Endothelial cell of umbilical vein (primary cell): ENCODE measurements at regions of chr5 and their contacts with region 1.

Region 1: GRCh38 chr5:127867389-127867788 is 164.2 kb downstream of the CCDC192 start:
- DNase-seq: no peak
- H3K4me3 ChIP-seq: no peak overlapping the region
- H3K27ac ChIP-seq: no peak overlapping the region
- H3K4me1 ChIP-seq: peaks cover 36% of the 10 kb centered on the region
- H3K27me3 ChIP-seq: peaks cover 0 to 7% of the 10 kb centered on the region in 2 experiments
- CTCF ChIP-seq: no peak
- POLR2A ChIP-seq: no peak

Region 2: DNA sequence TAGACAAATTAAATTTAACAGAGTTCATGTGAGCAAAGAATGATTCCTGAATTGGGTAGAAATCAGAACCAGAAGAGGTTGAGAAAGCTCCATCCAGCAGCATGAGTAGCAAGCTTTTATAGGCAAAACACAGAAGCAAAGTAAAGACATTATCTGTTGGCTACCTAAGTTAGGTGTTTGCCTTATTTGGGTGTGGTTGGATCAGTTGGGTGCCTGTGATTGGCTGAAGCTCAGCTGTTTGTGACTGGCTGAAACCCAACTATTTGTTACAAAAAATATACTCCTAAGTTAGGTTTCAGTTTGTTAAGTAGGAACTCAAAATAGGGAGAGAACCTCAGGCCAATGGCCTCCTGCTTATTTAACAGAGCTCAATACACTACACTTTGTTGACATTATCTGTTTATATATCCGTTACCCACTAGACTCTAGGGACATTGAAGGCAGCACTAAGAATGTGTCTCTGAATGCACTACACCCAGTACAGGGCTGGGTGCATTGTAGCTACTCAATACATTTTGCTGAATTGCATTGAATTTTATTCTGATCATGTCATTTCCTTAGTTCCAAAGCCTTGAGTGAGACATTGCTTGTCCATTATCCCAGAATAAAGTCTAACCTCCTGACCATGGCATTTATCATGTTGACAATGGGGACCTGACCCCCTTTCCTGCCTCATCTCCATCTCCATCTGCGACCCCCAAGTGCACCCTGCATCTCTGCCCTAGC is 65.5 kb before region 1 on chr5:
- CTCF ChIA-PET with region 1: interaction called, 3 read pairs
- POLR2A ChIA-PET with region 1: interaction called, 3 read pairs
- dilution Hi-C with region 1: no loop called
- intact Hi-C with region 1: loop called (anchors 1 kb)
- DNase-seq: peak; percentile 71
- H3K4me3 ChIP-seq: no peak overlapping the region
- H3K27ac ChIP-seq: peak overlapping the region; percentile 75
- H3K4me1 ChIP-seq: peaks cover 17% of the 10 kb centered on the region
- H3K27me3 ChIP-seq: no peaks in the 10 kb centered on the region
- CTCF ChIP-seq: no peak
- POLR2A ChIP-seq: no peak

Region 3: DNA sequence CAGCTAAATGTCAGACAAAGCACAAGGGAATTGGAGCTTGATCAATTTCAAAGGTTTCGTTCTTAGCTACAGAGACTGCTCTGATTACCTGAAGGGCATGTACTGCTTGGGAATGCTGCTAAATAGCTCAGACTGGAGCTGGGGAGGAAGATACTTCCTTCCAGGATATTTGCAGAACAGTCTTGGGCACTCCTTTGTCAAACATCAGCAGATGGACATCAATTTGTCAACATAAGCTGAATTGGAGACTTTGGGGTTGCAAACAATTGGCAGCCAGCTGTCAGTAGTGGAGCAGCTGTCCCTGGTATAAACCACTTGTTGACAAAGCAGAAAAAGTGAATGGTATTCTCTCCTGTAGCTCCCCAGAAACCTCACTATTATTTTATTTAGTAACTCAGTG is 17.8 kb after region 1 on chr5:
- CTCF ChIA-PET with region 1: interaction called, 3 read pairs
- POLR2A ChIA-PET with region 1: no interaction called
- dilution Hi-C with region 1: no loop called
- intact Hi-C with region 1: loop called (anchors 1 kb)
- DNase-seq: peak; percentile 25
- H3K4me3 ChIP-seq: no peak overlapping the region
- H3K27ac ChIP-seq: no peak overlapping the region
- H3K4me1 ChIP-seq: peaks cover 14% of the 10 kb centered on the region
- H3K27me3 ChIP-seq: no peaks in the 10 kb centered on the region
- CTCF ChIP-seq: no peak
- POLR2A ChIP-seq: no peak